PC-3 (cell line): ENCODE measurements at regions of chr2 and their contacts with region 1.

Region 1: GRCh38 chr2:225668606-225669266 is 269.2 kb downstream of the NYAP2 start:
- DNase-seq: peak; percentile 82
- ATAC-seq: peak; percentile 90
- H3K4me3 ChIP-seq: no peak overlapping the region
- H3K27ac ChIP-seq: peak overlapping the region; percentile 17; the same call in 1 of the 2 replicates
- H3K4me1 ChIP-seq: peaks cover 16% of the 10 kb centered on the region
- H3K27me3 ChIP-seq: no peaks in the 10 kb centered on the region
- CTCF ChIP-seq: peak; percentile 93

Region 2: GRCh38 chr2:225797394-225797793 is 128.7 kb after region 1 on chr2:
- CTCF ChIA-PET with region 1: interaction called, 3 read pairs
- POLR2A ChIA-PET with region 1: no interaction called
- intact Hi-C with region 1: loop called (anchors 1 kb)
- DNase-seq: no peak
- ATAC-seq: no peak
- H3K4me3 ChIP-seq: no peak overlapping the region
- H3K27ac ChIP-seq: no peak overlapping the region
- H3K4me1 ChIP-seq: no peaks in the 10 kb centered on the region
- H3K27me3 ChIP-seq: no peaks in the 10 kb centered on the region
- CTCF ChIP-seq: 0 out of 2 replicates have a peak, but pooled peaks have one; percentile 22

Region 3: GRCh38 chr2:225814554-225814953 is 145.8 kb after region 1 on chr2:
- CTCF ChIA-PET with region 1: no interaction called
- POLR2A ChIA-PET with region 1: no interaction called
- intact Hi-C with region 1: no loop called
- DNase-seq: no peak
- ATAC-seq: no peak
- H3K4me3 ChIP-seq: no peak overlapping the region
- H3K27ac ChIP-seq: no peak overlapping the region
- H3K4me1 ChIP-seq: no peaks in the 10 kb centered on the region
- H3K27me3 ChIP-seq: no peaks in the 10 kb centered on the region
- CTCF ChIP-seq: no peak

Region 4: DNA sequence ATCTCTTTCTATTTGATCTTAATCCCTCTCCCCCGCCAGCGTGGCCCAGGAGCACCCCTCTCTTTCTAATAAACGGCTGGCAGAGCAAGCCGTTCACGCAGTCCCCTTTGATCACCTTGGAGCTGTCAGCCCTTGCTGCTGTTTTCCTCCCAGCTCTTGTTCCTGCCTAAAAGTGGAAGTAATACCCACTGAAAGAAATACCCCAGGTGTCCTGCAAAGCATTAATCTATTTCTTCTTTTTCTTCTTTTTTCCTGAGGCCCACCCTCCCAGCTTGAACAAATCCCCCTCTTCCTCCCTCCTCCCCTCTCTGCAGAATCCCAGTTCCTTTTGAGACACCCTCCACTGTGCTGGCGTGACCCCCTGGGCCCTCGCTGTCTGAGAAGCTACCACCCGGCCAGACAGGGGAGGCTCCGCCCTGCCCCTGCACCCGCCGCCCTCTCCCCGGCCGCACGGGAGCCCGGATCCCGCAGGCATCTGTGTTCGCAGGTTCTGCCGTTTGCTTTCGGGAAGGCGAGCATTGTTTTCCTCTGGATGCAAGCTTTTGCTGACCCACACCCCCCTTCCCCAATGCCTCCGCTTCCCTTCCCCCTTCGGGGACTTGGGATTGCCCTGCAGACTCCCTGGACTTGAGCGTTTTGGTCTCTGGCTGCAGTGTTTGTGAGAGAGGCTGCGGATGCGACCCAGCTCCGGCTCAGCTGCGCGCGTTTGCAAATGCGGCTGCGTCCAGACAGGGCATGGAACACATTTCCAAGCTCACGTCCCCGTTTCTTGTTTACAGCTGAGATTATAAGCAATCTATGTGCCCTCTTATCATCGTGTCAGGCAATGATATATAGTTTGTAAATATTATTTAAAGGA is 362.3 kb after region 1 on chr2:
- CTCF ChIA-PET with region 1: no interaction called
- POLR2A ChIA-PET with region 1: no interaction called
- intact Hi-C with region 1: loop called (anchors 5 kb)
- DNase-seq: peak; percentile 65
- ATAC-seq: peak; percentile 86
- H3K4me3 ChIP-seq: peak overlapping the region; percentile 73
- H3K27ac ChIP-seq: peak overlapping the region; percentile 64
- H3K4me1 ChIP-seq: peaks cover 12% of the 10 kb centered on the region
- H3K27me3 ChIP-seq: no peaks in the 10 kb centered on the region
- CTCF ChIP-seq: no peak

Region 5: DNA sequence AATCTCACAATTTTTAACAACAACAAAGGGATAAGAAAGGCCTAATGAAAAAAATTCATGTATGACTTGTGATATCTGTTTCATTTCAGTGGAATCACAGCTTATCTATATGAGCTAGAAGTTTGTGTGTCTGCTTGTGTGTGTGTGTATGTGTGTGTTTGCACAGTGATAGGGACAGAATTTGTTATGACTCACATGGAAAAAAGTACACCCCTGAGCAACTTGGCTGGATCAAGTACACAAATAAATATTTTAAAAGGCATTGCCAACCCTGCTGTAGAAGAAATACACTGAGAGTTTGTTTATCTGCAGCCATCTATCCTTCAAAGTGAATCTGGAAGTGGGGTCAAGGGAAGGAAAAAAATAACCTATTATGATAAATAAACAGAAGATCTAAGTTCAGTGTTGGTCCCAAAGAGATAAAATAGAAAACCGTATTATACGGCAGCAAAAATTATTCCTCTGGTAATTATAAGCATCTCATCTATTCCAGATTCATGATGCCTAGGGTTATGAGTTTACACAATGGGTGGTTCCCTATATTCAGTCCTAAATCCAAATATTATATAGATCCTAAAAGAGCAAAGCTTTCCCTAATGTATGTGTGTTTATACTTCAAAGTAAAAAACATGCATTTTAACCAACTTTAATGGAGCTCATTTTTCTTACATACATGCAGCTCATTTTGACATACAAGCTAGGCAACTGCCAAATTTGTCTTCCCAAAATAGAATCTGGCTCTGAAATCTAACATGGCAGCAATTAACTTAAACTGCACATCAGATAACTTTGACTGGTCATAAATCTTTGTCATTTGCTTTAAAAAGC is 710.2 kb after region 1 on chr2:
- CTCF ChIA-PET with region 1: no interaction called
- POLR2A ChIA-PET with region 1: interaction called, 5 read pairs
- intact Hi-C with region 1: loop called (anchors 10 kb)
- DNase-seq: peak; percentile 81
- ATAC-seq: peak; percentile 89
- H3K4me3 ChIP-seq: no peak overlapping the region
- H3K27ac ChIP-seq: peak overlapping the region; percentile 33
- H3K4me1 ChIP-seq: peaks cover 18% of the 10 kb centered on the region
- H3K27me3 ChIP-seq: no peaks in the 10 kb centered on the region
- CTCF ChIP-seq: no peak

Region 6: DNA sequence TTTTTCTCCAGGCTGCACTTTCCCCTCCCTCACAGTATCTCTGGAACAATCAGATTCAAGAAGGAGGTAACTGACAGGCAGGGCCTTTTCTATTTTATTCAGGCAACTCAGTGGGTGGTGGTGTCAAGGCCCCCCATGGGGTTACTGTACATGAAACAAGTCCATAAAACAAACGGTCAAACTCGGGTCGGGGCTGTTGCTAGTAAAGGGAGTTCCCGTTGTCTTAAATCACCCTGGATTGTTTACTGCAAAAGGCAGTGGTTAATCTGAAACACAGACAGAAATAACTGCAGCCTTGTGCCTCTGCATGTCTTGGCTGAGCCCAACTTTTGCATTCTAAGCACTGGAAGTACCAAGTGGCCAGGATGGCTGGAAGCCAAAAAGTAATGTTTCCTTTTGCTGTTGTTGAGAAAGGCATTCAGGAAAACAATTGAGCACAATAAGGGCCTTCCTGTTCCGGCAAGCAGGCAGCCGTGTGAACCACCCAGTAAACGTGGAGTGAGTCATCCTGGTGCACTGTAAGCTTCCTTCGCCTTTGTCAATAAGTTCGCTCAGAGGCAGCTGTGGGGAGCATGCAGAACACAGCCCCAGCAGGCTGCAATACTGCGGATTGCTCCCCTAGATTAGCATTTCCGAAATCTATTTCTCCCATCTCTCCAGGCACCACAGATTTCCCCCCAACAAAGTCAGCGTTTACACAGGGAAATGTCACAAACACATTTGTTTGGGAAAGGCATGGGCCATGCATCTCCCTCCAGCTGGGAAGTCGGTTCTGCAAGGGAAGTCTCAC is 981.3 kb after region 1 on chr2:
- CTCF ChIA-PET with region 1: no interaction called
- POLR2A ChIA-PET with region 1: no interaction called
- intact Hi-C with region 1: loop called (anchors 10 kb)
- DNase-seq: peak; percentile 98
- ATAC-seq: peak; percentile 91
- H3K4me3 ChIP-seq: no peak overlapping the region
- H3K27ac ChIP-seq: peak overlapping the region; percentile 97
- H3K4me1 ChIP-seq: peaks cover 43% of the 10 kb centered on the region
- H3K27me3 ChIP-seq: no peaks in the 10 kb centered on the region
- CTCF ChIP-seq: no peak

Region 7: GRCh38 chr2:226984750-226985582 is 1316.2 kb after region 1 on chr2:
- CTCF ChIA-PET with region 1: interaction called, 5 read pairs
- POLR2A ChIA-PET with region 1: no interaction called
- intact Hi-C with region 1: loop called (anchors 1 kb)
- DNase-seq: peak; percentile 75
- ATAC-seq: peak; percentile 83
- H3K4me3 ChIP-seq: no peak overlapping the region
- H3K27ac ChIP-seq: no peak overlapping the region
- H3K4me1 ChIP-seq: 0 out of 2 replicates have a peak, but pooled peaks cover 3% of the 10 kb centered on the region
- H3K27me3 ChIP-seq: no peaks in the 10 kb centered on the region
- CTCF ChIP-seq: peak; percentile 79